ENCODE measurements at regions of chr2 and their contacts with region 1.

Region 1: GRCh38 chr2:144320491-144320890 is 199.4 kb downstream of the ZEB2 start:
- DNase-seq: peak; percentile 40 to 83 (median 54)
- H3K4me3 ChIP-seq: no peak overlapping the region
- H3K4me3 Mint-ChIP-seq: peak overlapping the region; percentile 11 to 56 (median 48)
- H3K27ac ChIP-seq: no peak overlapping the region
- H3K27ac Mint-ChIP-seq: peak overlapping the region; percentile 70 to 98 (median 92)
- H3K4me1 ChIP-seq: peaks cover 32% of the 10 kb centered on the region
- H3K4me1 Mint-ChIP-seq: peaks cover 57 to 80% (median 68%) of the 10 kb centered on the region in 3 donors
- H3K27me3 ChIP-seq: no peaks in the 10 kb centered on the region
- H3K27me3 Mint-ChIP-seq: no peaks in the 10 kb centered on the region

Region 2: GRCh38 chr2:144310484-144310883 is 10.0 kb before region 1 on chr2:
- CTCF ChIA-PET with region 1: no interaction called
- POLR2A ChIA-PET with region 1: interaction called, 15 read pairs
- DNase-seq: no peak
- H3K4me3 ChIP-seq: no peak overlapping the region
- H3K4me3 Mint-ChIP-seq: peak overlapping the region in 6 of 7 donors; percentile 4 to 65 (median 30)
- H3K27ac ChIP-seq: no peak overlapping the region
- H3K27ac Mint-ChIP-seq: peak overlapping the region in 2 of 8 donors; percentile 10 to 83
- H3K4me1 ChIP-seq: no peaks in the 10 kb centered on the region
- H3K4me1 Mint-ChIP-seq: peaks cover 33 to 58% (median 50%) of the 10 kb centered on the region in 3 donors
- H3K27me3 ChIP-seq: no peaks in the 10 kb centered on the region
- H3K27me3 Mint-ChIP-seq: no peaks in the 10 kb centered on the region

Measured in CD8-positive, alpha-beta memory T cell (primary cell).